GM23248 (cell line): ENCODE measurements at regions of chr14 and their contacts with region 1.

Region 1: GRCh38 chr14:60184146-60184904 is 19.1 kb upstream of the DHRS7 start:
- DNase-seq: peak; percentile 81
- H3K4me3 ChIP-seq: peak overlapping the region; percentile 74
- H3K27ac ChIP-seq: no peak overlapping the region
- H3K4me1 ChIP-seq: peaks cover 14% of the 10 kb centered on the region
- H3K27me3 ChIP-seq: no peaks in the 10 kb centered on the region

Region 2: GRCh38 chr14:59632381-59632780 is 551.9 kb before region 1 on chr14:
- in situ Hi-C with region 1: loop called (anchors 25 kb)
- DNase-seq: peak; percentile 40
- H3K4me3 ChIP-seq: no peak overlapping the region
- H3K27ac ChIP-seq: no peak overlapping the region
- H3K4me1 ChIP-seq: no peaks in the 10 kb centered on the region
- H3K27me3 ChIP-seq: peaks cover 33% of the 10 kb centered on the region

Region 3: GRCh38 chr14:59964251-59965007 is 219.9 kb before region 1 on chr14:
- in situ Hi-C with region 1: loop called (anchors 5 kb)
- DNase-seq: peak; percentile 28
- H3K4me3 ChIP-seq: no peak overlapping the region
- H3K27ac ChIP-seq: no peak overlapping the region
- H3K4me1 ChIP-seq: 0 out of 2 replicates have a peak, but pooled peaks cover 7% of the 10 kb centered on the region
- H3K27me3 ChIP-seq: no peaks in the 10 kb centered on the region

Region 4: DNA sequence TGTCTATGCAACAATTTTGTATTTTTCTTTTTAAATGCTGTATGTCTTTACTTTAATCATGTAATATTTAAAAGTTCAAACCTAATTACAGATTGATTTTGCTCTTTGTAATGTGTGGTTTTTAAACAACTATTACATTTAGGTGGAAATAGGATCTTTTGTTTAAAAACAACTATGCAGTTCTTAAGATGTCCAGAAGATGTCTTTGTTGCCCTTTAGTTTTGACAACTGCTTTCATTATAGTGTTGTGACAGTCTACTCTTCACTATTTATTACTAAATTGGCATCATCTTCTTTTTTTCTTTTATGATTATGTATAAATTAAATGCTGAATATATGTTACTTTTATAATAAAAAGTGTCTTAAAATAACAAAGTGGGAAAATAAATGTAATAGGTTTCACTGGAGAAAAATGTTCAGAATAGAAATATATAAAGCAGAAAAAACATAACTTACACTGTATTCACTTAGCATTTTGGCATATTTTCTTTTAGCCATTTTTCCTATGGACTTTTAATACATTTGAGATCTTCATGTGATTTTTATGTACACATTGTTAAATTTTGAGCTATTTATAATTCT is 119.7 kb before region 1 on chr14:
- in situ Hi-C with region 1: loop called (anchors 10 kb)
- DNase-seq: peak; percentile 57
- H3K4me3 ChIP-seq: no peak overlapping the region
- H3K27ac ChIP-seq: no peak overlapping the region
- H3K4me1 ChIP-seq: peaks cover 10% of the 10 kb centered on the region
- H3K27me3 ChIP-seq: no peaks in the 10 kb centered on the region